Dendritic cell treated with granulocyte-macrophage colony-stimulating factor and Interleukin-4, amounts not matched to agents 40 ng/mL and 50 ng/mL, for 4 days (primary cell): ENCODE measurements at regions of chr13 and their contacts with region 1.

Region 1: DNA sequence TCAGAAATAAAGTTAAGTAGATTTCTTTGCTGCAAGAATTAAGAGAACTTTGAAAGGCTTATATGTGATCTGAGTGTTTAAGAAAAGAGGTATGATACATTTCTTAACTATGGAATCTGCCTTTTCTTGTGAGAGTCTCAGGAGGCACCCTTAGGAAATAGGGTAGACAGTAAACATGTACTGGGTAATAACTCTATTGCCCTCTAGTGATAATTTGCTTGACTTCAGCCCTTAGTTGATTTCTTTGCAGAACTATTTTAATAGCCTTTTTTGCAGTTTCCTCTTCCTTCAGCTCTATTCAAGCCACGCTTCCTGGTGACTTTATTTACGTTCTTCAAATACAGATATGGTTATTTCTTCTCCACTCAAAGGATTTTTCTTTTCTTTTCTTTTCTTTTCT is 37.0 kb upstream of the CCNA1 start:
- H3K4me3 Mint-ChIP-seq: no peak overlapping the region
- H3K27ac Mint-ChIP-seq: peak overlapping the region; percentile 68
- H3K4me1 Mint-ChIP-seq: no peaks in the 10 kb centered on the region
- H3K27me3 Mint-ChIP-seq: no peaks in the 10 kb centered on the region

Region 2: DNA sequence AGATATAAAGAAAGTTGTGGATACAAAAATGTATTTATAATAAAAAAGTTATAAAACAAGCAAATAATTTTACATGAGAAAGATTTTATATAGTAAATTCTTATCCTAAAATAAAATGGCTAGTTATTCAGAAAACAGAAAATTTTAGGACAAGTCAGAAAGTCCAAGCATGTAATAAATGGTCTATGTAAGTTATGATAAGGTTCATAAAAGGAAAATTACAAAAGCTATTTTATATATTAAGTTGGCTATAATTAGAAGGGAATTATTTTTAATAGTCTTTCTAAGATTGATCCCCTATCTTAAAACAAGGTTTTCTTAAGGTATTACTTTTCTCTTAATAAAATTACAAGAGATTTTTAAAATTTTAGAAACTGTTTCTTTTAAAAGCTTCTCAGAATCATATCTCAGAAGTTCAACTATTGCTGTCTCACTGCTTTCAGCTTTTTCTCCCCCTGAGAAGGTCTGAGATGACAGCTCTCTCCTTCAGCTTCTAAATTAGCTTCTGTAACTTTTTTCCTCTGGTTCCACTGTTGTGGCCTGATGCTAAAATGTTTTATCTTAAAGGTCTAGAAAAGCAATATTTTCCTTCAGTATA is 106.4 kb before region 1 on chr13:
- intact Hi-C with region 1: loop called (anchors 5 kb)
- H3K4me3 Mint-ChIP-seq: no peak overlapping the region
- H3K27ac Mint-ChIP-seq: no peak overlapping the region
- H3K4me1 Mint-ChIP-seq: no peaks in the 10 kb centered on the region
- H3K27me3 Mint-ChIP-seq: no peaks in the 10 kb centered on the region